CD4-positive, alpha-beta T cell (primary cell): ENCODE measurements at regions of chr18 and their contacts with region 1.

Region 1: DNA sequence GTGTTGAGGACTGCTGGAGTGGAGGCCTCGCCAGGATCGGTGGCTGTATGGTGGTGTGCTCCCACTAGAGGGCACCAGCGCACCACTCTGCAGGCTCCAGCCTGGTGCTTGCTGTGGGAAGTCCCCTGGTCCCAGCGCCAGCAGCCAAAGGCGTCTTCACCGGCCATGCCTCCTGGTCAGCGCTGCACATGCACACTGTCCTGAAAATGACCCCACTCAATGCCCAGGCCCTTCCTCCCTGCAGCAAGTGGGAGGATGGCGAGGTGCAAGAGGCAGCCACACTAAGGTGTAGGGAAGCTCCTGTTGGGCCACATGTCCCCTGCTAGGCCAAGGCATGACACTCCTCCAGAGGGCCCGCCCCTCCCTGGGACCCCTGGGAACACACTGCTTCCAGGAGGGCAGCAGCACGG is 136.5 kb downstream of the CTIF start:
- DNase-seq: peak; percentile 61 to 90 (median 78)
- ATAC-seq: peak; percentile 96
- H3K4me3 ChIP-seq: no peak overlapping the region
- H3K4me3 Mint-ChIP-seq: no peak overlapping the region
- H3K27ac ChIP-seq: no peak overlapping the region
- H3K27ac Mint-ChIP-seq: no peak overlapping the region
- H3K4me1 ChIP-seq: peaks cover 9% of the 10 kb centered on the region
- H3K4me1 Mint-ChIP-seq: no peaks in the 10 kb centered on the region
- H3K27me3 ChIP-seq: no peaks in the 10 kb centered on the region
- H3K27me3 Mint-ChIP-seq: no peaks in the 10 kb centered on the region
- CTCF ChIP-seq: peak; percentile 79

Region 2: GRCh38 chr18:48777026-48777743 is 101.8 kb after region 1 on chr18:
- CTCF ChIA-PET with region 1: no interaction called
- POLR2A ChIA-PET with region 1: no interaction called
- intact Hi-C with region 1: loop called in 1 of 2 experiments (anchors 5 kb)
- DNase-seq: peak; percentile 49 to 86 (median 66)
- ATAC-seq: peak; percentile 91
- H3K4me3 ChIP-seq: no peak overlapping the region
- H3K4me3 Mint-ChIP-seq: no peak overlapping the region
- H3K27ac ChIP-seq: no peak overlapping the region
- H3K27ac Mint-ChIP-seq: no peak overlapping the region
- H3K4me1 ChIP-seq: peaks cover 18% of the 10 kb centered on the region
- H3K4me1 Mint-ChIP-seq: peaks cover 6% of the 10 kb centered on the region
- H3K27me3 ChIP-seq: no peaks in the 10 kb centered on the region
- H3K27me3 Mint-ChIP-seq: no peaks in the 10 kb centered on the region
- CTCF ChIP-seq: peak; percentile 91

Region 3: GRCh38 chr18:48975649-48976204 is 300.4 kb after region 1 on chr18:
- CTCF ChIA-PET with region 1: no interaction called
- POLR2A ChIA-PET with region 1: no interaction called
- intact Hi-C with region 1: loop called in 1 of 2 experiments (anchors 2 kb)
- DNase-seq: peak; percentile 18 to 84 (median 48)
- ATAC-seq: peak; percentile 80
- H3K4me3 ChIP-seq: peak overlapping the region; percentile 52
- H3K4me3 Mint-ChIP-seq: no peak overlapping the region
- H3K27ac ChIP-seq: no peak overlapping the region
- H3K27ac Mint-ChIP-seq: no peak overlapping the region
- H3K4me1 ChIP-seq: peaks cover 22% of the 10 kb centered on the region
- H3K4me1 Mint-ChIP-seq: peaks cover 14% of the 10 kb centered on the region
- H3K27me3 ChIP-seq: peaks cover 0 to 7% of the 10 kb centered on the region in 2 experiments
- H3K27me3 Mint-ChIP-seq: peaks cover 36% of the 10 kb centered on the region
- CTCF ChIP-seq: no peak

Region 4: GRCh38 chr18:49238433-49239042 is 563.2 kb after region 1 on chr18:
- CTCF ChIA-PET with region 1: no interaction called
- POLR2A ChIA-PET with region 1: no interaction called
- intact Hi-C with region 1: loop called (anchors 1 to 2 kb)
- DNase-seq: peak in 3 of 14 experiments; percentile 19 to 34 (median 32)
- ATAC-seq: no peak
- H3K4me3 ChIP-seq: no peak overlapping the region
- H3K4me3 Mint-ChIP-seq: no peak overlapping the region
- H3K27ac ChIP-seq: no peak overlapping the region
- H3K27ac Mint-ChIP-seq: no peak overlapping the region
- H3K4me1 ChIP-seq: no peaks in the 10 kb centered on the region
- H3K4me1 Mint-ChIP-seq: no peaks in the 10 kb centered on the region
- H3K27me3 ChIP-seq: no peaks in the 10 kb centered on the region
- H3K27me3 Mint-ChIP-seq: no peaks in the 10 kb centered on the region
- CTCF ChIP-seq: peak; percentile 26

Region 5: GRCh38 chr18:49447810-49448745 is 772.7 kb after region 1 on chr18:
- CTCF ChIA-PET with region 1: no interaction called
- POLR2A ChIA-PET with region 1: no interaction called
- intact Hi-C with region 1: loop called (anchors 1 to 2 kb)
- DNase-seq: peak in 11 of 14 experiments; percentile 3 to 81 (median 29)
- ATAC-seq: no peak
- H3K4me3 ChIP-seq: no peak overlapping the region
- H3K4me3 Mint-ChIP-seq: no peak overlapping the region
- H3K27ac ChIP-seq: no peak overlapping the region
- H3K27ac Mint-ChIP-seq: no peak overlapping the region
- H3K4me1 ChIP-seq: peaks cover 5% of the 10 kb centered on the region
- H3K4me1 Mint-ChIP-seq: peaks cover 37% of the 10 kb centered on the region
- H3K27me3 ChIP-seq: no peaks in the 10 kb centered on the region
- H3K27me3 Mint-ChIP-seq: no peaks in the 10 kb centered on the region
- CTCF ChIP-seq: peak; percentile 44

Region 6: DNA sequence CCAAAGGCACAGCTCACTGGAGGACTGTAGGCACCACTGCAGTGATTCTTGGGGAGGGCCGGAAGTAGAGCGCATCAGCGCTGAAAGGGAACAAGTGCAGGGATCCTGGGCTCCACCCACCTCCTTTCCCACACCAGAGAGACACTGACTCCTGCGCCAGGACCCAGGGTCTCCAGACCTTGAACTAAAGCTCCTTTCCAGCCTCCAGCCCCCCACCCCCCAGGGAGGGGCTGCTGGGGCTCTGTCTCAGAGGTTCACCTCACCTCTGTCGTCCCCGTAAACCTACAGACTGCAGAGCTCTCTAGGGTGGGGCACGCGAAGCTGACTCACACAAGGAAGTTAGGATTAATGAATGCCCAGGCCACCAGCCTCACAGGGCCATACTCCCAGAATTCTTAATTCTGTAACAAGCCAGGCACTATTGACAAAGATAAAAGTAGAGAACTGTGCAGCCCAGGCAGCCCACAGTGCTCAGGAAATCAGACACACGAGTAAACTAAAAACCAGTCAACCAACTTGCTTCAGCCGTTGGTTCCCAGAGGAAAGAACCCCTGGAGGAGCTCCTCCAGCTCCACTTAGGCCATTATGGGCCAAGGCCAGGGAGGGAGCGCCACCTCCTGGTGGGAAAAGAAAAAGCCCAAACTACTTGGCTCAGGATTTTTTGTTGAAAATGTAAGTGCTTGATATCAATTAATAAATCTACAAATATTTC is 1183.1 kb after region 1 on chr18:
- CTCF ChIA-PET with region 1: no interaction called
- POLR2A ChIA-PET with region 1: no interaction called
- intact Hi-C with region 1: loop called (anchors 1 to 2 kb)
- DNase-seq: peak; percentile 24 to 74 (median 48)
- ATAC-seq: no peak
- H3K4me3 ChIP-seq: no peak overlapping the region
- H3K4me3 Mint-ChIP-seq: no peak overlapping the region
- H3K27ac ChIP-seq: no peak overlapping the region
- H3K27ac Mint-ChIP-seq: no peak overlapping the region
- H3K4me1 ChIP-seq: peaks cover 9% of the 10 kb centered on the region
- H3K4me1 Mint-ChIP-seq: no peaks in the 10 kb centered on the region
- H3K27me3 ChIP-seq: no peaks in the 10 kb centered on the region
- H3K27me3 Mint-ChIP-seq: no peaks in the 10 kb centered on the region
- CTCF ChIP-seq: peak; percentile 85